Activated naive CD4-positive, alpha-beta T cell treated with anti-CD3 and anti-CD28 coated beads for 36 hours (primary cell): ENCODE measurements at regions of chr22 and their contacts with region 1.

Region 1: DNA sequence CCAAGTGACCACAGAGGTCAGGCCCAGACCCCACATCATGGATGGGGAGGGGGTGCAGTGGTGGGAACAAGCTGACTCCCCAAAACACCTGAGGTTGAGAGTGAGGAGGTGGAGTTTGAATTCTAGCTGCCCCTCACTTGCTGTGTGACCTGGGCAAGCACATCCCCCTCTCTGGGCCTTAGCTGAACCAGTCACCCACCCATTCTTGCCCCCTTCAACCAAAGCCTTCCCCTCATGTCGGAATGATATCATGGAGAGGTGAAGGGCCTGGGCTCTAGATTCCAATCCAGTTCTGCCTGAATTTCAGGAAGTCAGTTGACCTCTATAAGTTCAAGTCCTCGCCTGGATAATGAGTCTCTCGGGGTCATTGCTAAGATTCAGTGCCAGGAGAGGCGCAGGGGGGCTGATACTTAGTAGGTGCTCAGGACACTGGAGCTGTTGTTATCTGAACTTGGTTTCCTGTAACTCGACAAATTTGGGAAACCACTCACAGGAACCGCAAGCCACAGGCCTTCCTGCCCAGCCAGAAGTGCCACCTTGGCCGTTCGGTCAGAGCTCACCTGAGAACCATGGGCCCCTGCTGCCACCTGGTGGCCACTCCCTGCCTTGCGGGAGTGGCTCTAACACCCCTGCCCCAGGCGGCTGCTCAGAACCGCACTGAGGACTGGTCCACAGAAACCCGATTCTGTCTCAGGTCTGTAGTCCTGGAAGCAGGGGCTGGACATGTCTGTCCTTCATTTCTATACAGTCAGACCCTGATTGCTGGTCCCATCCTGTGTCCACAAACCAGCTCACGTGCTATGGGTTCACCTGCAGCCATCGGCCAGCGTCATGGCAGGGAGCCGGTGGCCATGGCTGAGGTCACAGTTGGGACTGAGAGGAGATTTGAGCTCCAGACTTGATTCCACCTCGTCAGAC is 6.9 kb downstream of the CDC42EP1 start:
- DNase-seq: peak; percentile 97
- H3K4me3 Mint-ChIP-seq: peak overlapping the region; percentile 36
- H3K27ac Mint-ChIP-seq: peak overlapping the region; percentile 68
- H3K4me1 Mint-ChIP-seq: peaks cover 22% of the 10 kb centered on the region
- H3K27me3 Mint-ChIP-seq: peaks cover 11% of the 10 kb centered on the region

Region 2: DNA sequence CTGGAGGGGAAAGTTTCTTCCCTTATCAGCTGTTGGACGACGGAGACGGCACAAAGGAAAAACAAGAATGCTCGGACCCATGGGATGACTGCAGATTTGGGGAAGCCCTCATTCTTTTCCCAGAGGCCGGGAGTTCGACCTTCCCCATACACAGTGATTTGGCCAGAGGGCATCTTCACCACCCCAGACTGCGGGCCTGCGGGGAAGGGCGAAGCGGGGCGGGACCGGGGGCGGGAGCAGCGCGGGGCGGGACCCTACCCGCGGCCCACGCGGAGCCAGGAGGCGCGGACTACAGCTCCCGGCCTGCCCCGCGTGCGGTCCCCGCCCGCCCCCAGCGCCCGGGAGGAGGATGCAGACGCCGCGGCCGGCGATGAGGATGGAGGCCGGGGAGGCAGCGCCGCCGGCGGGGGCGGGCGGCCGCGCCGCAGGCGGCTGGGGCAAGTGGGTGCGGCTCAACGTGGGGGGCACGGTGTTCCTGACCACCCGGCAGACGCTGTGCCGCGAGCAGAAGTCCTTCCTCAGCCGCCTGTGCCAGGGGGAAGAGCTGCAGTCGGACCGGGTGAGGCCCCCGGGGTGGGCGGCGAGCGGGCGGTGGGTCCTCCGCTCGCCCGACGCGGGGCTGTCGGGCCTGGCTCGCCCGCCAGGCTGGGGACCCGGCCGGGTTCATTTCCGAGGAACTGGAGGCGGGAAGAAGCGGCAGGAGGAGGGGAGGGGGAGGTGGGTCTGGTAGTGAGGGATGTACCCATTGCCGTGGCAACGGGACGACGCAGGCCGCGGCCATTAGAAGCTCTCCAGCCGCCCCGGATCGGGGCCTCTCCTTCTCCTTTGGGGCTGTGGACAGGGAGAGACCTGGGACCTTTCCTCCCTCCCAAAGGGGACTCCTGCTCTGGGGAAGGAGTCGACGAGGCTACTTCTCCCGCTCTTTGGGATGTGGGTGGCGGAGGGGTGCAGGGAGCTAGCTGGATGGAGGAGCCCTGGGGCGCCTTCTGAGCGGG is 515.5 kb before region 1 on chr22 and contains the start of gene KCTD17:
- CTCF ChIA-PET with region 1: no interaction called
- intact Hi-C with region 1: no loop called
- DNase-seq: peak; percentile 79
- H3K4me3 Mint-ChIP-seq: peak within 1 kb of the TSS; percentile 80
- H3K27ac Mint-ChIP-seq: no peak within 1 kb of the TSS
- H3K4me1 Mint-ChIP-seq: peaks cover 11% of the 10 kb centered on the region
- H3K27me3 Mint-ChIP-seq: no peaks in the 10 kb centered on the region
- total RNA-seq, gene KCTD17: 22.6 to 23.1 TPM

Region 3: GRCh38 chr22:37316875-37317371 is 250.2 kb before region 1 on chr22:
- CTCF ChIA-PET with region 1: interaction called, 13 read pairs
- intact Hi-C with region 1: loop called (anchors 1 kb)
- DNase-seq: peak; percentile 85
- H3K4me3 Mint-ChIP-seq: no peak overlapping the region
- H3K27ac Mint-ChIP-seq: no peak overlapping the region
- H3K4me1 Mint-ChIP-seq: peaks cover 21% of the 10 kb centered on the region
- H3K27me3 Mint-ChIP-seq: no peaks in the 10 kb centered on the region

Region 4: DNA sequence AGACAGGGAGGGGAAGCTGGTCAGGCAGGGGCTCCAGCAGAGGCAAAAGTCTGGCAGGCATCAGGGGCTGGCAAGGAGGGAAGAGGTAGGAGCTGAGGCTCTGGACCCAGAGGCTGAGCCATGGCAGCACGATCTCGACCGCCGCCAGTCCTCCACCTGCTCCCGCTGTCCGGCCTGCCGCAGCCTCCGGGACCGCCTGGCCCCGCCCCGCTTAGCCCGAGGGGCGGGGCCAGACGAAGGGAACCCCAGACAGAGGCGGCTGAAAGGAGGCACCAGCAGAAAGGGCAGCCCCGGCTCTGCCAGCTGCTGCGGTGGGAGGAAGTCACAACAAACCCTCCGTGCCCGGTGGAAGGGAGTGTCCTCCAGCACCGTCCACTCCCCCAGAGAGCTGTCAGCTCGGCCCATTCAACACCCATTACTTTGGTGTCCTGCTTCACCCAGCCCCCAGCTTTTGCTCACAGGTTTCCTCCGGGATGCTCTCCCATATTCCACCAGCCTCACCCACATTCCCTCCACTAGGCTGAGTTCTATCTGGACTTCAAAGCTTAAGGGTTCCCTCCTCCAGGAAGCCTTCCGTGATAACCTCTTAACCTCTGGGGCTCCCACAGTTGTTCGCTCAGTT is 80.8 kb before region 1 on chr22 and contains the start of gene MFNG:
- CTCF ChIA-PET with region 1: interaction called, 25 read pairs
- intact Hi-C with region 1: loop called (anchors 1 kb)
- DNase-seq: peak; percentile 86
- H3K4me3 Mint-ChIP-seq: peak within 1 kb of the TSS; percentile 97
- H3K27ac Mint-ChIP-seq: peak within 1 kb of the TSS; percentile 97
- H3K4me1 Mint-ChIP-seq: peaks cover 65% of the 10 kb centered on the region
- H3K27me3 Mint-ChIP-seq: no peaks in the 10 kb centered on the region
- total RNA-seq, gene MFNG: 83.1 to 90.9 TPM

Region 5: GRCh38 chr22:37521236-37521739 is 45.9 kb before region 1 on chr22:
- CTCF ChIA-PET with region 1: no interaction called
- intact Hi-C with region 1: no loop called
- DNase-seq: no peak
- H3K4me3 Mint-ChIP-seq: no peak overlapping the region
- H3K27ac Mint-ChIP-seq: no peak overlapping the region
- H3K4me1 Mint-ChIP-seq: peaks cover 5% of the 10 kb centered on the region
- H3K27me3 Mint-ChIP-seq: peaks cover 33% of the 10 kb centered on the region

Region 6: DNA sequence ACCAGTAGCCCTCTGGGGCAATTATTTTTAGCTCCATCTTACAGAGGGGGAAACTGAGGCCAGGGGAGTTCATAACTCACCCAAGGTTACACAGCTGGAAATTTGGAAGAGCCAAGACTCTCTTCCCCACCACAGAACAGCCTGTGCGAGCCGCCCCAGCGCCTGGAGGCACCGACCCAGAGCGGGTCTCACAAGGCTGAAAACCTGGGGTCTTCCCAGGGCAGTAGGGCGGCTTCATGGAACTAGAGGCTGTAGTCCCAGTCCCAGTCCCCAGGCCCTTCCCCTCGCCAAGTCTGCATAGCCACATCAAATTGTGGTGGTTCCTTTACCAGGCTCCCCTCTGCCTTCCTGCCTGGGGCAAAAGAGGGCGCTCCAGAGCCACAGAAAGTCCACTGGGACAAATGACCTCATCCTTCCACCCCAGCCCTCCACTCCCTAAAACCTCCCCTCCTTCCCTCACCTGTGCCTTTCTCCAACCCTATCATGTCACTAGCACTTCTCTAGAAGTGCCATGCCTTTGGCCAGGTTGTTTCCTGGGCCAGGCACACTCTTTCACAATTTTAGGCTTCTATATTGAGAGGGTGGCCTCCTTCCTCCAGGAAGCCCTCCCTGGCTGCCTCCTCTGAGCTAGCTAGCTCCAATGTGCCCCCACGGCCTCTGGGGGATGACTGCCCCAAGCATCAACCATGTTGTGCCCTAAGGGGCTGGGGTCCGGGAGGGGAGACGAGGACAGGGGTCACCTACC is 22.0 kb before region 1 on chr22:
- CTCF ChIA-PET with region 1: interaction called, 496 read pairs
- intact Hi-C with region 1: loop called (anchors 1 kb)
- DNase-seq: peak; percentile 87
- H3K4me3 Mint-ChIP-seq: no peak overlapping the region
- H3K27ac Mint-ChIP-seq: no peak overlapping the region
- H3K4me1 Mint-ChIP-seq: peaks cover 22% of the 10 kb centered on the region
- H3K27me3 Mint-ChIP-seq: peaks cover 8% of the 10 kb centered on the region

Region 7: DNA sequence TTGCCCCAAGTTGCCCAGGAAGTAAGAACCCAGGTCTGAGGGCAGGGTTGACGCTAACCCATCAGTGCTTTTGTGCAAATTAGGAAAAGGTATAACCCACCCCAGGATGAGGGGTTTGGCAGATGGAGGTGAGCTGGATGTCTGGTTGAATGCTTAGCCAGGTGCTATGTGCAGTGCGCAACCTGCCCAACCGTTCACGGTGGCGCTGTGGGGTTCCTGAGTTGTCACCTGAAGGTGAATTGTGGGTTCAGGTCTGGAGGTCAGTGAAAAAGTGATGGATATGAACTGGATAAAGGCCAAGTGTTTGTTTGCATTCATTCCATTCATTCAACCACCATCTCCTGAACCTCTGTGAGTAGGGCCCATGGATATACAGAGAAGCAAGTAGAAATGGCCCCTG is 27.1 kb after region 1 on chr22:
- CTCF ChIA-PET with region 1: interaction called, 34 read pairs
- intact Hi-C with region 1: loop called (anchors 1 kb)
- DNase-seq: no peak
- H3K4me3 Mint-ChIP-seq: no peak overlapping the region
- H3K27ac Mint-ChIP-seq: no peak overlapping the region
- H3K4me1 Mint-ChIP-seq: peaks cover 13% of the 10 kb centered on the region
- H3K27me3 Mint-ChIP-seq: no peaks in the 10 kb centered on the region